ENCODE measurements at regions of chr18 and their contacts with region 1.

Region 1: DNA sequence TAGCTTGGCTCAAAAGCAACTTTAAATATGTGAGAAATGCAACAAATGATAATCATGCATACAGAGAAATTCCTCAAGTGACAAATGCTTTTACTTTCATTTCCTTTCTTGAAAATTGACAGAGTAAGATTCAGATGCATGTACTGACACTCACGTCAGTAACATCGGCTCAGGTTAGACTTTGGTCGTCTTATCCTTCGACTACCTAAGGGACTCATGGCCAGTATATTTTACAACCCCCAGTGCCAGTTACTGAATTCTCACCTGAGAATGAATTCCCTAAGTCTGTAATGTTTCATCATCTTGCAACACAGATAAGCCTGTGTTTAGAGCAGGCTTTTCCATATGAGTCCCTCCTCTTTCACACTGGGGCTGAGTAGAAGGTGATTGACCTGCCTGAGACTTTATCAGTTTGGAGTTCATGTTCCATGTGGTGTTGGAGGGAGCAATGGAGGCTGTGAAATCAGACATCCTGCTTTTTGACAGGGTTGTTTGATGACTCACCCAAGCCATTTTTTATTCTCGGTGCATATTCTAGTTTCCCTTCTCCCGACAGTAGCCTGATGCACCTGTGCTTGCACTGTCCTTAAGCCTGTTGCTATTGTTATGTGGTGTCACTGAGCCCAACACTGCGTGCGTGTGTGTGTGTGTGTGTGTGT is 30.5 kb upstream of the ATP8B1 start:
- DNase-seq: peak; percentile 3
- H3K4me3 Mint-ChIP-seq: peak overlapping the region; percentile 68
- H3K27ac Mint-ChIP-seq: peak overlapping the region; percentile 25
- H3K4me1 Mint-ChIP-seq: peaks cover 34% of the 10 kb centered on the region
- H3K27me3 Mint-ChIP-seq: peaks cover 14% of the 10 kb centered on the region

Region 2: DNA sequence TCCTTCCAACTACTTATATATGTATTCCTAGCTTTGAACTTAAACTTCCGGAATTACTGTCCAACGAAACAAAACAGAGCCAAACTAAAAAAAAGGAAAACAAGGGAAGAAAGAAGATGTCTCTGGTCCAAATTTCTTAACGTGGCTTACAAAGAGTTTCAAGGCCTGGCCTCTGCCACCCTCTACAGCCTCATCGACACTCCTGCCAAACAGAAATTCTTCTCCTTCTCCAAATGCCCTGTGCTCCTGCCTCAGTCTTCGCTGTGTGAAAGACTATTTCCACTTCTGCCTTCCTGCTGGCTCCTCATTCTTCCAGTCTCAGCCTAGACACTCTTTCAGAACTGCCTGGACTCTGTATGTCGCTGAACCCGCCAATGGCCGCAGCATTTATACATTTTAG is 1444.4 kb before region 1 on chr18:
- intact Hi-C with region 1: no loop called
- DNase-seq: no peak
- H3K4me3 Mint-ChIP-seq: no peak overlapping the region
- H3K27ac Mint-ChIP-seq: no peak overlapping the region
- H3K4me1 Mint-ChIP-seq: no peaks in the 10 kb centered on the region
- H3K27me3 Mint-ChIP-seq: peaks cover 2% of the 10 kb centered on the region

Region 3: GRCh38 chr18:56709463-56709862 is 1124.1 kb before region 1 on chr18:
- intact Hi-C with region 1: loop called (anchors 2 kb)
- DNase-seq: peak; percentile 41
- H3K4me3 Mint-ChIP-seq: no peak overlapping the region
- H3K27ac Mint-ChIP-seq: no peak overlapping the region
- H3K4me1 Mint-ChIP-seq: peaks cover 28% of the 10 kb centered on the region
- H3K27me3 Mint-ChIP-seq: no peaks in the 10 kb centered on the region

Region 4: DNA sequence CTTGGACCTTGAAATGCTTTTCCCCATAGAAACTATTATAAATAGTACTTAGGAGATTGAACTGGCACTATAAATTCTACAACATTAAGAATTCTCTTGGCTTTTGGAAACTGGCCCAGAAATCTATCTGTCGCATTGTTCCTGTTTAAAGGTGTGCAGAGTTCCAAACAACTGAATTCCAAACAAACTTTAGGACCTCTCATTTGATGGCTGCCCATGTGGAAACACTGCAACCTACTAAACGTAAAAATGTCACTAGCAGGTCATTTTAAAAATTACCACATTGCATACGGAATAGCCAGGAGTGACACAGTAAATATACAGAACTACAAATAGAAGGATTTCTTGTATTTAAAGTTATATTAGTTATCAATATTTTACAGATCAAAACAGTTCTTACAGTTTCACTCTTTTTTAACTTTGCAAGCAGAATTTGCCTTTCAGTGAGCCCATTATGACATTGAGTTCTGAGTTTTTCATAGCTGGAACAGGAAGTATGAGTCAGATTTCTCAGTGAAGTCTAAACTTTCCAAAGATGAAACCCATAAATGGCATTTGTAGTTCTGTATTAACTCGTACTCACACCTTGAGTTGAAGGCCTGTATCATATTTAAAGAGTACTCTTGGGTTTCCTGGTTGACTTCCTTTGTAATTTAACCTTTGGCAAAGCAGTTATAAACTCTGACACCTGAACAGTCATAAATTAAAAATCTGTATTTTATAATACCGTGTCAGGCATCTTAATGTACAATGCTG is 829.0 kb before region 1 on chr18:
- intact Hi-C with region 1: loop called (anchors 5 kb)
- DNase-seq: no peak
- H3K4me3 Mint-ChIP-seq: no peak overlapping the region
- H3K27ac Mint-ChIP-seq: peak overlapping the region; percentile 57
- H3K4me1 Mint-ChIP-seq: peaks cover 46% of the 10 kb centered on the region
- H3K27me3 Mint-ChIP-seq: no peaks in the 10 kb centered on the region

Region 5: GRCh38 chr18:57630002-57630753 is 203.4 kb before region 1 on chr18:
- intact Hi-C with region 1: loop called (anchors 1 kb)
- DNase-seq: peak; percentile 89
- H3K4me3 Mint-ChIP-seq: peak overlapping the region; percentile 96
- H3K27ac Mint-ChIP-seq: peak overlapping the region; percentile 94
- H3K4me1 Mint-ChIP-seq: peaks cover 9% of the 10 kb centered on the region
- H3K27me3 Mint-ChIP-seq: no peaks in the 10 kb centered on the region

Region 6: GRCh38 chr18:58303363-58303762 is 469.8 kb after region 1 on chr18:
- intact Hi-C with region 1: loop called (anchors 10 kb)
- DNase-seq: peak; percentile 18
- H3K4me3 Mint-ChIP-seq: no peak overlapping the region
- H3K27ac Mint-ChIP-seq: peak overlapping the region; percentile 27
- H3K4me1 Mint-ChIP-seq: peaks cover 16% of the 10 kb centered on the region
- H3K27me3 Mint-ChIP-seq: peaks cover 29% of the 10 kb centered on the region

Region 7: DNA sequence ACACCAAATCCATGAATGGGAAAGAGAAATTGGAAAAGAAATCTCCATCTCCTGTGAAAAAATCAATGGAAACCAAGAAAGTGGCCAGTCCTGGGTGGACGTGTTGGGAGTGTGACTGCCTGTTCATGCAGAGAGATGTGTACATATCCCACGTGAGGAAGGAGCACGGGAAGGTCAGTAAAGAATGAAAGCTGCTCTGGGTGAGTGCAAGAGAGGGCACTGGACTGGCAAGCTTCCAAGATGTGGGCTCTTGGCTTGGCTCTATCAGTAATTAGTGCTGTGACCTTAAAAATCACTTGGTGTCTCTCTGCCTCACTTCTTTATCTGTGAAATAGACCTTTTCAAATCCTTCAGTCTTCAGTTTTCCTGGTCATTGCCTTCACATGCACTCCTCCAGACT is 1120.1 kb after region 1 on chr18:
- intact Hi-C with region 1: no loop called
- DNase-seq: no peak
- H3K4me3 Mint-ChIP-seq: no peak overlapping the region
- H3K27ac Mint-ChIP-seq: no peak overlapping the region
- H3K4me1 Mint-ChIP-seq: no peaks in the 10 kb centered on the region
- H3K27me3 Mint-ChIP-seq: peaks cover 6% of the 10 kb centered on the region